A549 (cell line): ENCODE measurements at regions of chr20 and their contacts with region 1.

Region 1: GRCh38 chr20:57089691-57090150 is 176.7 kb downstream of the BMP7 start:
- DNase-seq: peak; percentile 61 to 71
- ATAC-seq: peak; percentile 82 to 95
- H3K4me3 ChIP-seq: no peak overlapping the region
- H3K27ac ChIP-seq: no peak overlapping the region
- H3K4me1 ChIP-seq: no peaks in the 10 kb centered on the region
- CTCF ChIP-seq: peak; percentile 92
- EP300 ChIP-seq: no peak
- POLR2A ChIP-seq: no peak
- RAD21 ChIP-seq: peak; percentile 91 to 92

Region 2: DNA sequence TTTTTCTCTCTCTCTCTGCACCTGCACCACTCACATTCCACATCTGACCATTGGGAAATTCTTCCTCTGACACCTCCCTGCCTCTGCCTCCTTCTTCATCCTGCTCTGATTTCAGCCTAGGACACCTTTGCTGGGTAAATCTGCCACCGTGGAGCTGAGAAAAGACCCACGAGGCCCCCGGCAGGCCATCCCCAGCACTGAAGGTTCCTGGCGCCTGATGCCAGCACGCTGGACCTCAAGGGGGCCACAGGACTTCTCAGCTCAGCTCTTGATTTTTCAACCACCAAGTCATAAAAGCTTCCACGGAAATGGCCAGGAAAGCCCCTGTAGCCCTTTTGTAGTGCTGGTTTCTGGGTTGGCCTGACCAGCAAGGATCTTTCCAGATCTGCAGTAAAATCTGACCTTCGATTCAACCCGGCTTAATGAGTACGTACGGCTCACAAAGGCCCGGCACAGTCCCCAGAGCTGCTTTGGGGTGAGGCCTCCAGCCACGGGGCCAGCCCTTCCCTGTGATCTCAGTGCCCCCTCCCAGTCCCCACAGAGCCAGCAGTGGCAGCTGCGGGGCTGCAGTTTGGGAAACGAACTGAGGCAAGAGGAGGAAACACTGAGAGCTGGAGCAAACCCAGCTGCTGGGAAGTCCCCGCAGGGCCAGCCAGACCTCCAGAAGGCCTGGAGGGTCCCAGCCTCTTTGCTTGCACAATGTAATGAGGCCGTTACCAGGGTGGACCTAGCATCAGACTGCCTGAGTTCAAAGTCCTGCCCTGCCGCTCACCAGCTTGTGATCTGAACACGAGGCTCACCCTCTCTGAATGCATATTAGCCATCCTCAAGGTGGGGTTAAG is 19.2 kb after region 1 on chr20:
- CTCF ChIA-PET with region 1: interaction called, 20 read pairs
- POLR2A ChIA-PET with region 1: no interaction called
- DNase-seq: no peak
- ATAC-seq: peak; percentile 21 to 40; a peak in 2 of 6 replicates
- H3K4me3 ChIP-seq: no peak overlapping the region
- H3K27ac ChIP-seq: no peak overlapping the region
- H3K4me1 ChIP-seq: no peaks in the 10 kb centered on the region
- CTCF ChIP-seq: no peak
- EP300 ChIP-seq: no peak
- POLR2A ChIP-seq: no peak
- RAD21 ChIP-seq: no peak

Region 3: DNA sequence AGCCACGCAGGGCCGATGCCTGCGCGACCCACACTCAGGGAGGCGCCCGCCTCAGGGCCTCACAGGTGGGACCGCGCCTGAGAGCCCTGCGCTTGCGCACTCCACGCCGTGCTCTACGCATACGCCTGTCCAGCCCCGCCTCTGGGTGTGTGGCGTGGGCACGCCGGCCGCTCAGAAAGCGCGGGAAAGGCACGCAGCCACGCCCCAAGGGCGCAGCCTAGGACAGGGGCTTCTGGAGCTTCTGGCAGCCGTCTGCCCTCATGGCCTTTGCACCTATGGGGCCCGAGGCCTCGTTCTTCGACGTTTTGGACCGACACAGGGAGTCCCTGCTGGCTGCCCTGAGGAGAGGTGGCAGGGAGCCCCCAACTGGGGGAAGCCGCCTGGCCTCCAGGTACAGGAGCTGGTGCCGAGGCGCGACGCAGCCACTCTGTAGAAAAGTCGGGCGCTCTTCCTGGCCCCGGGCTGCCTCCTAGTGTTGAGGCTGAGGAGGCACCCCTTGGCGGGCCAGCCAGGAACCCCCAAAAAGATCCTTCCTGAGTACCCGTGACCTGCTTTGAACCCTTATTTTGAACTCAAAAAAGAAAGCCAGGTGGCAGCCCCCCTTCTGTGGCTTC is 240.0 kb after region 1 on chr20 and contains the start of gene SPO11:
- CTCF ChIA-PET with region 1: interaction called, 51 read pairs
- POLR2A ChIA-PET with region 1: no interaction called
- DNase-seq: no peak
- ATAC-seq: no peak
- H3K4me3 ChIP-seq: no peak within 1 kb of the TSS
- H3K27ac ChIP-seq: no peak within 1 kb of the TSS
- H3K4me1 ChIP-seq: no peaks in the 10 kb centered on the region
- CTCF ChIP-seq: no peak
- EP300 ChIP-seq: no peak
- POLR2A ChIP-seq: no peak
- RAD21 ChIP-seq: 0 out of 5 replicates have a peak, but pooled peaks of 1 of the 2 experiments have one; percentile 5
- polyA plus RNA-seq, gene SPO11: not detected in 2 replicates

Region 4: GRCh38 chr20:57346477-57346876 is 256.8 kb after region 1 on chr20:
- CTCF ChIA-PET with region 1: interaction called, 244 read pairs
- POLR2A ChIA-PET with region 1: no interaction called
- DNase-seq: peak; percentile 32 to 69
- ATAC-seq: peak; percentile 75 to 82; a peak in 5 of 6 replicates
- H3K4me3 ChIP-seq: no peak overlapping the region
- H3K27ac ChIP-seq: no peak overlapping the region
- H3K4me1 ChIP-seq: no peaks in the 10 kb centered on the region
- CTCF ChIP-seq: peak; percentile 91
- EP300 ChIP-seq: no peak
- POLR2A ChIP-seq: no peak
- RAD21 ChIP-seq: peak; percentile 89 to 92